ENCODE measurements at regions of chr6 and their contacts with region 1.

Region 1: DNA sequence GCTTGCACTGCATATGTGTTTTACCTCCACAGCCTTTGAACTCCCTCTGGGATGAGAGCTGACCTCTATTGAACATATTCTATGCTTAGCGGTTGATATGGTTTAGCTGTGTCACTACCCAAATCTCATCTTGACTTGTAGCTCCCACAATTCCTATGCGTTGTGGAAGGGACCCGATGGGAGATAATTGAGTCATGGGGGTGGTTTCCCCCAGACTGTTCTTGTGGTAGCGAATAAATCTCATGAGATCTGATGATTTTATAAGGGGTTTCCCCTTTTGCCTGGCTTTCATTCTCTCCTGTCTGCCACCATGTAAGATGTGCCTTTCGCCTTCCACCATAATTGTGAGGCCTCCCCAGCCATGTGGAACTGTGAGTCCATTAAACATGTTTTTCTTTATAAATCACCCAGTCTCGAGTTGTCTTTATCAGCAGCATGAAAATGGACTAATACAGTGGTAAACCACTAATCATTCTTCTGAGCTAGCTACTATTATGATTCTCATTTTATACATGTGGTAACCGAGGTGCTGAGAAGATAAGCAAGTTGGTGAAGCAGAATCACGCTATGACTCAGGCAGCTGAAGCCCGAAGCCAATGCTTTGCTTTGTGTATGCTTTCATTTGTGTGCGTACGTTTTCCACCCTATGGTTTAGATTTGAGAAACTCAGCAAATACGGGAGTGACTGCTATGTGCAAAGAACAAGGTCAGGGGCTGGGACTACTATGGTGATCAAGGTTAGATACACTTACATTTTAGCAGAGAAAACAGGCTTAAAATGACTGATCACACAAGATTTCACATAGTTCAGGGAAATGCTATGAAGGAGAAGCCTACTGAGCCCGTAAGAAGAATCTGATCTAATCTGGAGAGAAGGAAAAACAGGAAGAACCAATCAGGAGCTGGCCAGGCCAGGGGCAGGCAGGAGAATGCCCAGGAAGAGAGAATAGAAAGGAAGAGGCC is 363.5 kb downstream of the ESR1 start:
- DNase-seq: peak; percentile 82
- H3K4me3 Mint-ChIP-seq: peak overlapping the region; percentile 60
- H3K27ac Mint-ChIP-seq: peak overlapping the region; percentile 89
- H3K4me1 Mint-ChIP-seq: peaks cover 50% of the 10 kb centered on the region
- H3K27me3 Mint-ChIP-seq: no peaks in the 10 kb centered on the region

Region 2: DNA sequence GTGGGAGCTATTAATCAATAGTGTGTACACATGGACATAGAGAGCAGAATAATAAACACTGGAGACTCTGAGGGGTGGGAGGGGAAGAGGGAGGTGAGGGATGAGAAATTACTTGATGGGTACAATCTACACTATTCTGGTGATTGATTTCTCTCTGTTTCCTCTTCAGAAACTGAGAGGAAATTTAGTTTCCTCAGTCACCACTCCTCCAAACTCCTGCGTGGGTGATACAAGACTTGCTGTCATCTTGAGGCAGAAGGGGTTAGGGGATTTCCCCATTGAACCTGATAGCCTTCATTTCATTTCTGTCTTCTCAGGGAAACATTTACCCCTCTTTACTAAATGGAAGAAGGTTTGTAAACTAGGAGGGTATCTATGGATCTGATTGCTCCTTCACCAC is 447.8 kb before region 1 on chr6:
- CTCF ChIA-PET with region 1: no interaction called
- intact Hi-C with region 1: loop called (anchors 1 kb)
- DNase-seq: peak; percentile 76
- H3K4me3 Mint-ChIP-seq: no peak overlapping the region
- H3K27ac Mint-ChIP-seq: no peak overlapping the region
- H3K4me1 Mint-ChIP-seq: peaks cover 29% of the 10 kb centered on the region
- H3K27me3 Mint-ChIP-seq: peaks cover 3% of the 10 kb centered on the region

Region 3: GRCh38 chr6:151757506-151758245 is 413.3 kb before region 1 on chr6:
- CTCF ChIA-PET with region 1: interaction called, 3 read pairs
- intact Hi-C with region 1: loop called (anchors 1 kb)
- DNase-seq: peak; percentile 67
- H3K4me3 Mint-ChIP-seq: peak overlapping the region; percentile 36
- H3K27ac Mint-ChIP-seq: peak overlapping the region; percentile 80
- H3K4me1 Mint-ChIP-seq: peaks cover 37% of the 10 kb centered on the region
- H3K27me3 Mint-ChIP-seq: no peaks in the 10 kb centered on the region

Region 4: DNA sequence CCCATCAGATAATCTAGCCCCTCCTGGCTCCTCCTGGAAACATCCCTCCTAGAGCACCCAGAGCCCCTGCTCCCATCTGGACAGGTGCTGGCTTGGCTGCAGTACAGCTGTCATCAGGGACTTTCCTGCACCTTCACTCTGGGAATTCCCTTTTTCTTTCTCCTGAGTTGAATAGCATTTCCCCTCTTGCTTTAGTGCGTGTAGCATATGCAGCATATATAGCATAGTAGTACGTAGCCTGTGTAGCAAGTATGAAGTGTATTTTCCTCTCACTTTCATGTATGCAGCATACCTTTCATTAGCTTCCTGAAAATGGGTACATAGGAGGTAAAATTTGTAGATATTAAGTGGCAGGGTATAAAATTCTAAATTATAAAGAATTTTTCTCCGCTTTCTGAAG is 10.6 kb before region 1 on chr6:
- CTCF ChIA-PET with region 1: interaction called, 4 read pairs
- intact Hi-C with region 1: loop called (anchors 1 kb)
- DNase-seq: peak; percentile 64
- H3K4me3 Mint-ChIP-seq: no peak overlapping the region
- H3K27ac Mint-ChIP-seq: peak overlapping the region; percentile 85
- H3K4me1 Mint-ChIP-seq: peaks cover 28% of the 10 kb centered on the region
- H3K27me3 Mint-ChIP-seq: no peaks in the 10 kb centered on the region

Region 5: GRCh38 chr6:152244998-152245630 is 74.1 kb after region 1 on chr6:
- CTCF ChIA-PET with region 1: no interaction called
- intact Hi-C with region 1: no loop called
- DNase-seq: no peak
- H3K4me3 Mint-ChIP-seq: no peak overlapping the region
- H3K27ac Mint-ChIP-seq: no peak overlapping the region
- H3K4me1 Mint-ChIP-seq: no peaks in the 10 kb centered on the region
- H3K27me3 Mint-ChIP-seq: no peaks in the 10 kb centered on the region

Region 6: GRCh38 chr6:152982768-152983636 is 812.0 kb after region 1 on chr6 and contains the start of gene FBXO5:
- CTCF ChIA-PET with region 1: no interaction called
- intact Hi-C with region 1: loop called (anchors 2 kb)
- DNase-seq: peak; percentile 97
- H3K4me3 Mint-ChIP-seq: peak within 1 kb of the TSS; percentile 99
- H3K27ac Mint-ChIP-seq: peak within 1 kb of the TSS; percentile 100
- H3K4me1 Mint-ChIP-seq: peaks cover 44% of the 10 kb centered on the region
- H3K27me3 Mint-ChIP-seq: no peaks in the 10 kb centered on the region
- total RNA-seq, gene FBXO5: 61.4 to 62.3 TPM